ENCODE measurements at regions of chr1 and their contacts with region 1.

Region 1: DNA sequence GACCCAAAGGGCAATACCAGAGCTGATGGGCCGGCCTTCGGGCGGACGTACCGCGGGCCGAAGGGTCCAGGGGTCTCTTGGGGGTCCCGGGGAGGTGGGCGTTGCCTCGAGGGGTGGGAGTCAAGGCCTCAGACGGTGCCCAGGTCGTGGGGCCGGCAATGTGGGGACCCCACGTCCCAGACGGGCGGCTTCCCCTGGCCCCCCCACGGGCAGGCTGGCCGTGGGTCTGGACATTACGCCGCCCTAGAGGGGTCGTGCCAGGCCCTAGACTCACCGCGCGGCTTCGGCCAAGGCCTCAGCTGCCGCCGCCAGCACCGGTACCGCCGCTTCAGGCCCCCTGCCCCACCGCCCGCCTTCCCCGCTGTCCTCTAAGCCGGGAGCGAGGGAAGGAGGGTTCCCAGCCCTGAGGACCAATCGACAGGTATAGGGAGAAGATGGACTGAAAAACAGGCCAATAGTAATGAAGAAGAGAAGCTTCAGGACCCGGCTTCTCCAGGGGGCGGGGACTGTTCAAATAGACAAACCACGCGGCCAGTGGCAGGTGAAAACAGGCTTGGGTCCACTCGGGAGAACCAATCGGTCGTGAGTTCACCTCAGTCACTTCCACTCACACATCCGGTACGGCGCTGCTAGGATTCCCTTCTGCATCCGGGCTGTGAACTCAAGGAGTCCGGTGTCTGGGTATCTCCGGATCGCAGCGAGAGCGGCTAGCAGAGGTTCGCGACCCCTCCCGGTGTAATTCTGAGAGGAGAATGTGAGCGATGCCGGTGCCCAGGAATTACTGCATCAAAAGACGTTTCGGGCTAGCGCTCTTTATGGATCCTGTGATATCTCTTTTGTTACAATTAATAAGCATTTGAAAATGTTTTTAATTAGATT is at the start of gene MTOR:
- DNase-seq: peak; percentile 100
- H3K4me3 Mint-ChIP-seq: peak within 1 kb of the TSS; percentile 95
- H3K27ac Mint-ChIP-seq: peak within 1 kb of the TSS; percentile 86
- H3K4me1 Mint-ChIP-seq: no peaks in the 10 kb centered on the region
- H3K27me3 Mint-ChIP-seq: no peaks in the 10 kb centered on the region
- CTCF ChIP-seq: peak; percentile 17
- total RNA-seq, gene MTOR: 45.9 and 54.0 TPM in 2 replicates

Region 2: GRCh38 chr1:11059990-11060830 is 202.2 kb before region 1 on chr1 and contains the start of gene SRM:
- CTCF ChIA-PET with region 1: no interaction called
- POLR2A ChIA-PET with region 1: interaction called, 11 read pairs
- intact Hi-C with region 1: no loop called
- DNase-seq: peak; percentile 88
- H3K4me3 Mint-ChIP-seq: peak within 1 kb of the TSS; percentile 97
- H3K27ac Mint-ChIP-seq: peak within 1 kb of the TSS; percentile 92
- H3K4me1 Mint-ChIP-seq: peaks cover 7% of the 10 kb centered on the region
- H3K27me3 Mint-ChIP-seq: no peaks in the 10 kb centered on the region
- CTCF ChIP-seq: peak; percentile 43
- total RNA-seq, gene SRM: 284 and 327 TPM in 2 replicates

Region 3: DNA sequence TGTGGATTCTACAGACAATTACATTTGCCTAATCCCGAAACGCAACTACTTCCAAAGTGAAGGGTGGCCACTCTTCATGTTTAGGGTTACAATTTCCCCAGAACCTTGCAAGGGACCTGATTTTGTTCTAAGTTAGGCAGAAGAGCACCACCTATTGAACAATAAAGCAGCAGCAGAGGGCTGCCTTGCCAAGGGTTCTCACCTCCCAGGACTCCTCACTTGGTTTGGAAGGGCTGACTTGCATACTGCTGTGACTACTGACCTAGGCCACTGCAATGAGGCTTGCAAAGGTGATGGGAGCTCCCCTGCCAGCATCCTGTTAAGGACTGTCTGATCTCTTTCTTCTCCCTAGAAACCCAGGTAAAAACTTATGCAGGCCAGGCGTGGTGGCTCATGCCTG is 14.3 kb before region 1 on chr1:
- CTCF ChIA-PET with region 1: interaction called, 18 read pairs
- POLR2A ChIA-PET with region 1: interaction called, 15 read pairs
- intact Hi-C with region 1: no loop called
- DNase-seq: no peak
- H3K4me3 Mint-ChIP-seq: no peak overlapping the region
- H3K27ac Mint-ChIP-seq: no peak overlapping the region
- H3K4me1 Mint-ChIP-seq: no peaks in the 10 kb centered on the region
- H3K27me3 Mint-ChIP-seq: no peaks in the 10 kb centered on the region
- CTCF ChIP-seq: no peak

Region 4: GRCh38 chr1:11272832-11273594 is 10.6 kb after region 1 on chr1 and contains the start of gene UBIAD1:
- CTCF ChIA-PET with region 1: interaction called, 4 read pairs
- POLR2A ChIA-PET with region 1: interaction called, 77 read pairs
- intact Hi-C with region 1: no loop called
- DNase-seq: peak; percentile 86
- H3K4me3 Mint-ChIP-seq: peak within 1 kb of the TSS; percentile 90
- H3K27ac Mint-ChIP-seq: peak within 1 kb of the TSS; percentile 92
- H3K4me1 Mint-ChIP-seq: peaks cover 14% of the 10 kb centered on the region
- H3K27me3 Mint-ChIP-seq: no peaks in the 10 kb centered on the region
- CTCF ChIP-seq: no peak
- total RNA-seq, gene UBIAD1: 21.7 and 23.2 TPM in 2 replicates

Region 5: GRCh38 chr1:11285883-11286734 is 23.7 kb after region 1 on chr1:
- CTCF ChIA-PET with region 1: interaction called, 3 read pairs
- POLR2A ChIA-PET with region 1: interaction called, 13 read pairs
- intact Hi-C with region 1: no loop called
- DNase-seq: no peak
- H3K4me3 Mint-ChIP-seq: no peak overlapping the region
- H3K27ac Mint-ChIP-seq: no peak overlapping the region
- H3K4me1 Mint-ChIP-seq: peaks cover 12% of the 10 kb centered on the region
- H3K27me3 Mint-ChIP-seq: no peaks in the 10 kb centered on the region
- CTCF ChIP-seq: peak; percentile 17

Region 6: GRCh38 chr1:11654137-11654938 is 391.9 kb after region 1 on chr1 and contains the starts of genes FBXO2 and FBXO44:
- CTCF ChIA-PET with region 1: no interaction called
- POLR2A ChIA-PET with region 1: interaction called, 12 read pairs
- intact Hi-C with region 1: no loop called
- DNase-seq: peak; percentile 67
- H3K4me3 Mint-ChIP-seq: peak within 1 kb of the TSS; percentile 76
- H3K27ac Mint-ChIP-seq: peak within 1 kb of the TSS; percentile 66
- H3K4me1 Mint-ChIP-seq: no peaks in the 10 kb centered on the region
- H3K27me3 Mint-ChIP-seq: no peaks in the 10 kb centered on the region
- CTCF ChIP-seq: no peak
- total RNA-seq, gene FBXO2: 3.3 and 5.3 TPM in 2 replicates
- total RNA-seq, gene FBXO44: 16.0 and 16.3 TPM in 2 replicates

Region 7: GRCh38 chr1:11681071-11681771 is 418.8 kb after region 1 on chr1 and contains the start of gene MAD2L2:
- CTCF ChIA-PET with region 1: no interaction called
- POLR2A ChIA-PET with region 1: interaction called, 10 read pairs
- intact Hi-C with region 1: no loop called
- DNase-seq: peak; percentile 81
- H3K4me3 Mint-ChIP-seq: peak within 1 kb of the TSS; percentile 88
- H3K27ac Mint-ChIP-seq: peak within 1 kb of the TSS; percentile 79
- H3K4me1 Mint-ChIP-seq: peaks cover 5% of the 10 kb centered on the region
- H3K27me3 Mint-ChIP-seq: no peaks in the 10 kb centered on the region
- CTCF ChIP-seq: no peak
- total RNA-seq, gene MAD2L2: 40.1 and 46.3 TPM in 2 replicates

Measured in MCF 10A (cell line).